ENCODE measurements at regions of chr21 and their contacts with region 1.

Region 1: GRCh38 chr21:38355992-38356797 is 99.4 kb downstream of the KCNJ15 start:
- DNase-seq: peak; percentile 77
- H3K4me3 Mint-ChIP-seq: no peak overlapping the region
- H3K27ac Mint-ChIP-seq: no peak overlapping the region
- H3K4me1 Mint-ChIP-seq: peaks cover 7% of the 10 kb centered on the region
- H3K27me3 Mint-ChIP-seq: no peaks in the 10 kb centered on the region
- CTCF ChIP-seq: peak; percentile 96

Region 2: DNA sequence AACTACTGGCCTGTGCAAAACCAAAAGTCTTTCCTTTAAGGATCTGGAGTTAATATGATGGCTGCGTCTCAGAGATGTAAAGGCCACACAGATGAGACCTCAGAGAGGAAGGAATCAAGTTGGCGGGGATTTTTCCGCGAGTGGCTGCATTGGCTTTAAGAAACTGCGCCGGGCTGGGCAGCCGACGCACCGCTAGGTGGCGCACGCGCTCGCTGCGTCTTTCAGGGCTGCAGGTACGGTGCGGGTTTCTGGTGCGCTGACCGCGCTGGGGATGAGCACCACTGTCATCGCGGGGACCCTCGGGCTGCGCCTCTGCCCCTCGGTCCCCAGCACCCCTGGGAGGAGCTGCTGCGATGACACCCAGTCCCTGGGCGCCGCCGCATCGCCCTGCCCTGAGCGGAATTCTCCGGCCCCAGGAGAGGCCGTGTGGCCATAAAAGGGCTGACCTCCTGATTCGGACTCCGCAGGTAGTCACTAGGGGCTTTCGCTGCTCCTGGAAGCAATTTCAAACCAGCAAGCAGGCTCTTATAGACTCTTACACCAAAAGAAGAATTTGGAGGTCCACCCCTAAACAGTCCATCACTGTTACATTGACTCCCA is 680.9 kb before region 1 on chr21:
- CTCF ChIA-PET with region 1: interaction called, 10 read pairs
- POLR2A ChIA-PET with region 1: no interaction called
- intact Hi-C with region 1: no loop called
- DNase-seq: peak; percentile 46
- H3K4me3 Mint-ChIP-seq: no peak overlapping the region
- H3K27ac Mint-ChIP-seq: no peak overlapping the region
- H3K4me1 Mint-ChIP-seq: peaks cover 15% of the 10 kb centered on the region
- H3K27me3 Mint-ChIP-seq: peaks cover 11% of the 10 kb centered on the region
- CTCF ChIP-seq: peak; percentile 89

Region 3: GRCh38 chr21:37711836-37712568 is 644.2 kb before region 1 on chr21:
- CTCF ChIA-PET with region 1: interaction called, 40 read pairs
- POLR2A ChIA-PET with region 1: interaction called, 4 read pairs
- intact Hi-C with region 1: loop called (anchors 1 kb)
- DNase-seq: peak; percentile 74
- H3K4me3 Mint-ChIP-seq: no peak overlapping the region
- H3K27ac Mint-ChIP-seq: no peak overlapping the region
- H3K4me1 Mint-ChIP-seq: no peaks in the 10 kb centered on the region
- H3K27me3 Mint-ChIP-seq: no peaks in the 10 kb centered on the region
- CTCF ChIP-seq: peak; percentile 84

Region 4: DNA sequence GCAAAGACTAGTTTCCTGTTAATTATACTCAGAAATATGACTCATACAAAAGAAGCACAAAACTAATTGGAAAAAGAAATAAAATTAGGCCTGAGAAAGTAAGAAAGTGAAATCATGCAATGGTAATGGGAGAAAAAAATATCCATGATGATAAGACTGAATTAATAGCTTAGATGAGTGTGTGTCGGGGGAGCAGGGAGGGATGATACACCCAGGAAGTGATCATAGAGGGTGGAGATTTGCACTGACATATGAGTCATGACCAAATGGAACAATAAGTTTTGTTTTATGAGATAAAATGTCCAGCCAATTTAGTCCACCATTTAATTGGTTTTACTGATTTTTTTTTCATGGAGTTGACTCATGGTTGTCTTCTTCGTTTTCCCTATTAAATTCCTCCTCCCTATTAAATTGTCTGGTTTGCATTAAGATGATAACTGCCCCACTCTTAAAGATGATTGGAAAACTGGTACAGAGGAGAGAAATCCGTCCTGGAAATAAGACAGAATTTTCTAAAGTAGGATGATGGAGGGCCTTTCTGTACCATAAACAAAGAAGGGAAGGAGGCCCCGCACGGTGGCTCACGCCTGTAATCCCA is 328.2 kb before region 1 on chr21:
- CTCF ChIA-PET with region 1: no interaction called
- POLR2A ChIA-PET with region 1: no interaction called
- intact Hi-C with region 1: no loop called
- DNase-seq: peak; percentile 47
- H3K4me3 Mint-ChIP-seq: no peak overlapping the region
- H3K27ac Mint-ChIP-seq: no peak overlapping the region
- H3K4me1 Mint-ChIP-seq: peaks cover 10% of the 10 kb centered on the region
- H3K27me3 Mint-ChIP-seq: no peaks in the 10 kb centered on the region
- CTCF ChIP-seq: no peak

Region 5: GRCh38 chr21:38126669-38127303 is 229.4 kb before region 1 on chr21:
- CTCF ChIA-PET with region 1: interaction called, 12 read pairs
- POLR2A ChIA-PET with region 1: no interaction called
- intact Hi-C with region 1: no loop called
- DNase-seq: peak; percentile 78
- H3K4me3 Mint-ChIP-seq: no peak overlapping the region
- H3K27ac Mint-ChIP-seq: no peak overlapping the region
- H3K4me1 Mint-ChIP-seq: peaks cover 3% of the 10 kb centered on the region
- H3K27me3 Mint-ChIP-seq: no peaks in the 10 kb centered on the region
- CTCF ChIP-seq: peak; percentile 68

Region 6: GRCh38 chr21:38205940-38206339 is 150.3 kb before region 1 on chr21:
- CTCF ChIA-PET with region 1: interaction called, 10 read pairs
- POLR2A ChIA-PET with region 1: interaction called, 4 read pairs
- intact Hi-C with region 1: no loop called
- DNase-seq: no peak
- H3K4me3 Mint-ChIP-seq: no peak overlapping the region
- H3K27ac Mint-ChIP-seq: no peak overlapping the region
- H3K4me1 Mint-ChIP-seq: no peaks in the 10 kb centered on the region
- H3K27me3 Mint-ChIP-seq: peaks cover 15% of the 10 kb centered on the region
- CTCF ChIP-seq: no peak

Region 7: DNA sequence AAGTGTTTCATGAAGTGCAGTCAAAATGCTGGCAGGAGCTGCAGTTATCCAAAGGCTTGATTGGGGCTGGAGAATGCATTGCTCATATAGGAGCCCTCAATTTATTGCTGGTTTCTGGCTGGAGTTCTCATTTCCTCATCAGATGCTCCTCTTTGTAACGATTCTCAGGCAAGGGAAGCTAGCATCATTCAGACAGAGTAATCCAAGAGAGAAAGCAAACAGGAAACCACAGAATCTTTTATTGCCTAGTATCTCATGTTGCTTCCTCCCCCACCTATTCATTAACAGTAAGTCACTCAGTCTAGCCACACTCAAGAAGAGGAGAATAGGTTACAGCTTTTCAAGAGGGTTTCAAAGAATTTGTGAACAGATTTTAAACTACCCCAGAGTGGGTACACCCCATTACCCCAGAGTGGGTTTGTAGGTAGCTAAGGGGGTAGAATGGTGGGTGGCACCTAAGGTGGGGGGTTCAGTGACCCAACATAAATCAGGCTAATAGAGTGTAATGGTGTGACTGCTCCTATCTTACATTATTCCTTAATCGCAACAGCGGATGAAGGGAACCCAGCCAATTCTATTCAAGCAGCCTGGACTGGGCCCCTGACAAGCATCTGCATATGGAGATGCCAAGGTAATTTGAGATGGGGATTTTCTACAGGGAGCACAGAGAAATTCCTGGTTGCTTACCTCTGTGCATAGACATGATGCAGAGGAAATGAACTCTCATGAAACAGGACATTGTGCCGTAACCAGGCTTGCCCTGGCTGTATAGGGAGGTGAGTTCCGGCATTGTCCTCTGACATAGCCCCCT is 32.3 kb before region 1 on chr21:
- CTCF ChIA-PET with region 1: interaction called, 15 read pairs
- POLR2A ChIA-PET with region 1: no interaction called
- intact Hi-C with region 1: no loop called
- DNase-seq: peak; percentile 87
- H3K4me3 Mint-ChIP-seq: no peak overlapping the region
- H3K27ac Mint-ChIP-seq: no peak overlapping the region
- H3K4me1 Mint-ChIP-seq: peaks cover 24% of the 10 kb centered on the region
- H3K27me3 Mint-ChIP-seq: no peaks in the 10 kb centered on the region
- CTCF ChIP-seq: no peak

Measured in MCF 10A (cell line).